Activated CD4-positive, alpha-beta T cell treated with anti-CD3 and anti-CD28 coated beads for 36 hours (primary cell): ENCODE measurements at regions of chr16 and their contacts with region 1.

Region 1: DNA sequence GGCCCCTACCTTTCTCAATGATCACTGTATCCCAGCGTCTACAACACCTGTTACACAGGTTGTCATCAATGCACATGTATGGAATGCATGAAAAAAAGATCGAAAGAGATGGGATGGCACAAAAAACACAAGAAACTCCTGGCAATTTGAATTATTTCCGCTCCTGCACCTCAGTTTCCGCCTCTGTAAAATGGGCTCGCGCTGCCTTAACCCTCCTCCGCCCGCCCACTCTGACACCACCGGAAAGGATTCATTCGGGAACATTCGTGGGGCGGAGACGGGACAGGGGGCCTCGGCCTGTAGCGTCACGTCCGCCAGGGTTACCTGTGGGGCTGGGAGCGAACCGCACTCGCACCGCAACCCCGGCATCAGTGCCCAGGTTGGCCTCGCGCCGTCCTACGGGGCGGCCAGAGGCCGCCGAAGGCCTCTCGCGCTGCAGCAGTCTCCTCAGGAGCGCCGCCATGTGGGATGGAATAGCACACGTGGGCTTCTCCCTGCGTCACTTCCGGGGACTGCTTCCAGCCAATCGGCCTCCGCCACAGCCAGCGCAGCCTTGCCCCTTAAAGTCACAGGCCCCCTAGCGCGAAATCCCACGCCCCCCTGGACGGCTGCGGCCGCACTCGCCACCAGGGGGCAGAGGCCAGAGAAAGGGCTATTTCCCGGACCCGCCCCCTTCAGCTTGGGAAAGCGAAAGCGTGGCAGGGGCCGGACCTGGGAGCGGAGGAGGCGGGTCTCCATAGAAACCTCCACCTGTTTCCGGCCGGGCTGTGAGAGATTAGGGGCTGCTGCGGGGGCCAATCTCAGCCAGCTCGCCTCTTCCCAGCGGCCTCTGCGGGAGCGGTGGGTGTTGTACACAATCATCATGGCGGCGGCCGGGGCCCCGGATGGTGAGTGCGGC is at the starts of genes EARS2 and UBFD1:
- DNase-seq: peak; percentile 99
- ATAC-seq: peak; percentile 92
- H3K4me3 Mint-ChIP-seq: peak within 1 kb of the TSS; percentile 94
- H3K27ac Mint-ChIP-seq: peak within 1 kb of the TSS; percentile 94
- H3K4me1 Mint-ChIP-seq: peaks cover 34% of the 10 kb centered on the region
- H3K27me3 Mint-ChIP-seq: no peaks in the 10 kb centered on the region
- total RNA-seq, gene EARS2: 26.6 to 31.9 TPM
- total RNA-seq, gene UBFD1: 56.8 to 57.2 TPM

Region 2: GRCh38 chr16:21952793-21953540 is 1604.2 kb before region 1 on chr16 and contains the start of gene UQCRC2:
- CTCF ChIA-PET with region 1: no interaction called
- POLR2A ChIA-PET with region 1: no interaction called
- intact Hi-C with region 1: loop called in 1 of 2 experiments (anchors 1 kb)
- DNase-seq: peak; percentile 92
- ATAC-seq: peak; percentile 93
- H3K4me3 Mint-ChIP-seq: peak within 1 kb of the TSS; percentile 98
- H3K27ac Mint-ChIP-seq: peak within 1 kb of the TSS; percentile 100
- H3K4me1 Mint-ChIP-seq: peaks cover 58% of the 10 kb centered on the region
- H3K27me3 Mint-ChIP-seq: no peaks in the 10 kb centered on the region
- total RNA-seq, gene UQCRC2: 321 to 367 TPM

Region 3: DNA sequence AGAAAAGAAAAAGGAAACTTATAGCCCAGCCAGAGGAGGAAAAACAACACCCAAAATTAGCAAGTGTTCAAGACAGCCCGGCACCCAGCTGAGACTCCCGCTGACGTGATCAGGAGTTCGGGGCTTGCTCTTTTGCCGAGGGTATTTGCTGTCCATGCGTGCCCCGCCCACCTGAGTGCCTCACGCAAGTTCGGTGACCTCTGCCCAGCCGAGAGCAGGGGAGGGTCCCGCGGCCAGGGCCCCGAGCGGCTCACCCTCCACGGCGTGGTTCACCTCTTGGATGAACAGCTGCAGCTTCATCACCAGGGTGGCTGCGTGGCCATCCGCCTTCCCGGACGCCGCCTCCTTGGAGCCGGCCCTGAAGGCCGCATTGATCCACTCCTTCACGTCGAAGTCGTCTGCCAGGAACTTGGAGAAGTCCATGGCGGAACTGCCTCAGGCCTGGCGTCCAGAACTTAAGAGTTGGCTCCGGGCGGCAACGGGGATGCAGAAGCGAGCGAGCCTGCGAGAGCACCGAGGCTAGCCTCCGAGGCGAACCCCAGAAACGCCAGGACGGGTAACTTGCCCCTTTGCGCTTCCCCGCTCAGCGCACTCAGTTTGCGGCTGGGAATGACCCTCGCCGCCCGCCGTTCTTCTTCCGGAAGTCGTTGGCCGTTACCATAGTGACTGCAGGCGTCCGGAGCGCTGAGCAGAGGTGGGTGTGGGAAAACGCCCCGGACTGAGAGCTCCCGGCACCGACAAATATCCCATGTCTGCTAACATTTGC is 104.4 kb before region 1 on chr16 and contains the start of gene COG7:
- CTCF ChIA-PET with region 1: no interaction called
- POLR2A ChIA-PET with region 1: interaction called, 3 read pairs
- intact Hi-C with region 1: loop called in 1 of 2 experiments (anchors 1 kb)
- DNase-seq: peak; percentile 92
- ATAC-seq: peak; percentile 94
- H3K4me3 Mint-ChIP-seq: peak within 1 kb of the TSS; percentile 92
- H3K27ac Mint-ChIP-seq: peak within 1 kb of the TSS; percentile 93
- H3K4me1 Mint-ChIP-seq: peaks cover 20% of the 10 kb centered on the region
- H3K27me3 Mint-ChIP-seq: no peaks in the 10 kb centered on the region
- total RNA-seq, gene COG7: 18.1 to 19.9 TPM

Region 4: GRCh38 chr16:23510164-23510914 is 46.8 kb before region 1 on chr16 and contains the start of gene GGA2:
- CTCF ChIA-PET with region 1: no interaction called
- POLR2A ChIA-PET with region 1: no interaction called
- intact Hi-C with region 1: loop called (anchors 1 to 2 kb)
- DNase-seq: peak; percentile 88
- ATAC-seq: peak; percentile 87
- H3K4me3 Mint-ChIP-seq: peak within 1 kb of the TSS; percentile 89
- H3K27ac Mint-ChIP-seq: peak within 1 kb of the TSS; percentile 78
- H3K4me1 Mint-ChIP-seq: peaks cover 48% of the 10 kb centered on the region
- H3K27me3 Mint-ChIP-seq: no peaks in the 10 kb centered on the region
- total RNA-seq, gene GGA2: 86.7 to 114 TPM

Region 5: DNA sequence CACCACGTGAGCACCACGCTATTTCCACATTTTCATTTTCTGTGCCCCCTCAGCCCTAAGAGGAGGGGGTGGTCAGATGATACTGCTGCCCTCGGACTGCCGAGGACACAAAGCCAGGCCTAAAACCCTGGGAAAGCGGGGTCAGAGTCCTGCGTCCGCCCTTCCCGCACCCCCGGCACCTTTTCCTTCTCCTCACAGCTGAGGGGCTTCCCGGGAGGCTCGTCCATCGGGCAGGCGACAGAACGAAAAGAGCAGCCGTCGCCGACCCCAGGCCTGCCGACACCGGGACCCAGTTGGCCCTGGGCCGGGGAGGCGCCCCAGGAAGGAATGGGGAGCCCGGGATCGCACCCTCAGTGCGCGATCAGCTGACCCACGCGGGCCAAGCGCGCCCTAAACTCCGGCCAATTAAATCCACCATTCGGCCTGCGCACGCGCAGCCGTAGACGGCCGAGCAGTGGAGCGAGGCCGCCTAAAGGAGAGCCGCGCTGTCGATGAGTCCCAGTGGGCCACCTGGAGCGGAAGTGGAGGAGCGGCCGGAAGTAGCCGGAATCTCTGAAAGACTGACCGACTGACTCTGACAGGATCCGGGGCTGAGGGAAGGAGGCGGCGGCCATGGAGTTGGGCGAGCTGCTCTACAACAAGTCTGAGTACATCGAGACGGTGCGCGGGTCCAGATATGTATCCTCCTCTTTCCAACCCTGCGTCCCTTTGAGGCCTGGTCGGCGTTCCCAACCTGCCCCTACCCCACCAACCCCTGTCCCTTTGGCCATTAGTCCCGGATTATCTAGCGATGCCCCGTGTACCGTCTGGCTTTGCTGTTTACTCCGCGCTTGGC is 84.0 kb after region 1 on chr16 and contains the starts of genes DCTN5 and PALB2:
- CTCF ChIA-PET with region 1: interaction called, 3 read pairs
- POLR2A ChIA-PET with region 1: no interaction called
- intact Hi-C with region 1: loop called (anchors 1 kb)
- DNase-seq: peak; percentile 93
- ATAC-seq: peak; percentile 98
- H3K4me3 Mint-ChIP-seq: peak within 1 kb of the TSS; percentile 100
- H3K27ac Mint-ChIP-seq: peak within 1 kb of the TSS; percentile 96
- H3K4me1 Mint-ChIP-seq: peaks cover 34% of the 10 kb centered on the region
- H3K27me3 Mint-ChIP-seq: no peaks in the 10 kb centered on the region
- total RNA-seq, gene DCTN5: 47.1 to 55.8 TPM
- total RNA-seq, gene PALB2: 23.1 to 23.5 TPM

Region 6: DNA sequence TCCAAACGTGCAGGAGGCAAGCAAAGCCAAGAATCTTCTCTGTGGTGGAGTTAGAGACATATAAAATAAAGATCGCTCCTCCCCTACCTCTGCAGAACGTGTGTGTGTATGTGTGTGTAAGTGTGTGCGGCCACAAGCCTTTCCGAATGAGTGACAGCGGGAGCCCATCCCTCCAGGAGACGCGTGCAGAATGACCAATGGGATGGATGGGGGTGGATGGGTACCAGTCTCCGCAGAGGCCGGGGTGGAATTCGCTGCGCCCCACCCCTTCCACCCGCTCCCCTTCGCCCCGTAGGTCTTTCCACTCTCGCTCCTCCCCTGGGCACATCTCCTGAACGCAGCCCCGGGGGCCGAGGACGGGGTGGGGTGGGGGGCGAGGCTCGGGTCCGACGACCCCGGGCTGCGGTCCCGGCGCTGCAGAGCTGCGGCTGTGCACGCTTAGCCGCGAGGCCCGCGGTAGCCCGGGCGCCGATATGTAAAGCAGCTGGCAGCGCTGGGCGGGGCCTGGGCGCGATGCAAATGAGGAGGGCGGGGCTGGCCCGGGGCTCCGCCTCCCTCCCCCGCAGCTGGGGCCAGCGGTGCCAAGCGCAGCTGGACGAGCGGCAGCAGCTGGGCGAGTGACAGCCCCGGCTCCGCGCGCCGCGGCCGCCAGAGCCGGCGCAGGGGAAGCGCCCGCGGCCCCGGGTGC is 278.4 kb after region 1 on chr16 and contains the start of gene PRKCB:
- CTCF ChIA-PET with region 1: no interaction called
- POLR2A ChIA-PET with region 1: no interaction called
- intact Hi-C with region 1: loop called in 1 of 2 experiments (anchors 5 kb)
- DNase-seq: peak; percentile 95
- ATAC-seq: peak; percentile 79
- H3K4me3 Mint-ChIP-seq: peak within 1 kb of the TSS; percentile 80
- H3K27ac Mint-ChIP-seq: peak within 1 kb of the TSS; percentile 59
- H3K4me1 Mint-ChIP-seq: peaks cover 54% of the 10 kb centered on the region
- H3K27me3 Mint-ChIP-seq: peaks cover 2% of the 10 kb centered on the region
- total RNA-seq, gene PRKCB: 57.5 to 83.8 TPM

Region 7: DNA sequence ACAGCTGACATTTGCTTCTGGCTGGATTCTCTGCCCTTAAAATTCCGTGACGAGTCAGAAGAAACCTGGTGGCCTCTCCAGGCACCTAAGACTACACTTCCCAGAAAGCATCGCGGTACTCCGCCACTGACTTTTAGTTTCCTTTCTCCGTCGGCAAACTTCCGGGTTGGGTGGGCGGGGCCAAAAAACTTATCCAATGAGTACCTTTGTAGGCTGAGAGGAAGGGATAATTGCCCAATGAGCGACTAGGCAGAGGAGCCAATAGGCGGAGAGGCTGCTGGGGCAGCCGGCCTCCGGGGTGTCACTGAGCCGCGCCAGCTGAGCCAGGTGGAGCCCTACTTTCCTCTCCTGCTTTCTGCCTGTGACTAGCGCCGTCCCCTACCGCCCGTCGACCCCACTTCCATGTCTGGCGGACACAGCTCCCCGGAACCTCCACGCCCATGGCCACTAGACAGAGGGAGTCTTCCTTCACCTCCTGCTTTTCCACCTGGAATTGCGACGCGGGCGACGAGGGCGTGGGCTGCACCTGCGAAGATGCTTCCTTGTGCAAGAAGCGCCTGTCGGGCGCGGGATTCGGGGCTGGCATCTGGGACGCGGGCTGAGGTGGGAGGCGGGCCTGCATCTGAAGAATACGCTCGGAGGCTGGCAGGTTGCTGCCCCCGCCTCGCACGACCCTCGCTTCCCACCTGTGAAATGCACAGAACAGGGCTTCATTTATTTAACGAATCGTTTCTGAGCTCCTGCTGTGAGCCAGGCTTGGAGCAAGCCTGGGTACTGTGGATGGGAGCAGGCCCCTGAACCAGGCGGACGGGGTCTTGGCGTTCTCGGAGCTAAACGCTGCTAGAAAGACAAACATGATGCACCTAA is 1474.5 kb after region 1 on chr16:
- CTCF ChIA-PET with region 1: no interaction called
- POLR2A ChIA-PET with region 1: no interaction called
- intact Hi-C with region 1: loop called in 1 of 2 experiments (anchors 5 kb)
- DNase-seq: peak; percentile 93
- ATAC-seq: peak; percentile 97
- H3K4me3 Mint-ChIP-seq: peak overlapping the region; percentile 75
- H3K27ac Mint-ChIP-seq: peak overlapping the region; percentile 100
- H3K4me1 Mint-ChIP-seq: peaks cover 46% of the 10 kb centered on the region
- H3K27me3 Mint-ChIP-seq: no peaks in the 10 kb centered on the region